ENCODE measurements at regions of chr1 and their contacts with region 1.

Region 1: DNA sequence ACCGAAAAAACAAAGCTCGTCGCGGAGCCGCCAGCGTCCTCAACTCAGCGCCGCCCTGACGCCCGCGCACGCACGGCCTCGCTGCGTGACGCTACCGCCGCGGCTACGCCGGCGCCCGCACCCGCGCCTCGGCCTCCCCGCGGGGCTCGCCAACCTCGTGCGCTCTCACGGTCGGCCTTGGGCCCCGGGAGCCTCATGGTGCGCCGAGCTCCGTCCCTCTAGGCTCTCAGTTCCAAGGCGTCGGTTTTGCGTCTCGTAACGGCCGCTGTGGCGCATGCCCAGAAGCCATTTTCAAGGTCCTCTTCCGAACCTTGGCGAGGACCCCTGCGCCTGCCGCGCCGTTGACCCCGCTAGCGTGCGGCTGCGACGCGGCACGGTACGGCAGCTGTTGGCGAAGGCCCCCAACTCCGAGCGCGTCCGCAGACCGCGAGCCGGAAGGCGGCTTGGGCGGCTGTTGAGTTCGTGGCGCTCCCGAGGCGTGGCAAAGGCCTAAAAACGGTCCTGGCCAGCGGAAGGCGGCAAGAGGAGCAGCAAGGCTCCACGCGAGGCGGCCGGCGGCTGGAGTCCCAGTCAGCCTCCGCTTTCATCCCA is at the start of gene HENMT1:
- DNase-seq: peak; percentile 65 to 95 (median 76)
- ATAC-seq: peak; percentile 88
- H3K4me3 ChIP-seq: peak within 1 kb of the TSS; percentile 65
- H3K4me3 Mint-ChIP-seq: peak within 1 kb of the TSS; percentile 82
- H3K27ac ChIP-seq: peak within 1 kb of the TSS; percentile 95 to 96
- H3K27ac Mint-ChIP-seq: peak within 1 kb of the TSS; percentile 99
- H3K4me1 ChIP-seq: peaks cover 12% of the 10 kb centered on the region
- H3K4me1 Mint-ChIP-seq: peaks cover 43% of the 10 kb centered on the region
- H3K27me3 ChIP-seq: no peaks in the 10 kb centered on the region
- H3K27me3 Mint-ChIP-seq: no peaks in the 10 kb centered on the region
- CTCF ChIP-seq: no peak
- total RNA-seq, gene HENMT1: 6.3 to 8.2 TPM

Region 2: DNA sequence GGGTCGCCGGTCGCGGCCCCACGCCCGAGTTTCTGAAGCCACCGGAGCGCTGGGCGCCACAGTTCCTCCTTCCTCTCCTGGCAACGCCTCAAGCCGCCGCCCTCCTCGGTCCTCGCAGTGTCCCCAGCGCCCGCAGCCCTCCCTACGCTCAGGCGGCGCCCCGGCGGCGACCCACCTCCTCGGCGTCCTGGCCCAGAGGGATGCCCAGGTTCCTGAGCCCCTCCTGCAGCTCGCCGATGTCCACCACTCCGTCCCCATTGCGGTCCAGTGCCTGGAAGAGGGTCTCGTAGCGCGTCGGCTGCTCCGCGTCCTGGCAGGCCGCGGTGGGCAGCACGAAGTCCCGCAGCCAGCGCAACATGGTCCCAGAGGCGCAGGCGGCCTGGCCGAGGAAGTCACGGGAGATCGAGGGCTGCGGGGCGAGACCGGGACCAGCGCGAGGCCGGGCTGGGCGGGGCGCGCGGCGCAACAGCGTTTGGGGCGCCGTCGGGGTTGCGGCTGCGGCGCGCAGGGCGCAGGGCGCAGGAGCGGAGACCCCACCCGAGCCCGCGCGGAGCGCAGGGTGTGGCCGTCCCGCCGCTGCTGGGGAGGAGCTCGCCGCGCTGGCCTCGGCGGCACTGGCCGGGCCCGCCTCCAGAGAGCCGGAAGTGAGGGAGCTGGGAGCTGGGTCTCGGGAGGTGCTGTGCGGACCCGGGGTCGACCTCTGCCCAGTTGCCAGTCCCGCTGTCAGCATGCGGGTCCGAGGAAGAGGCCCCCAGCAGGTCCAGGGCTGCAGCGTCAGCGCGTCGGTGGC is 461.1 kb before region 1 on chr1 and contains the start of gene SLC25A24:
- CTCF ChIA-PET with region 1: no interaction called
- POLR2A ChIA-PET with region 1: interaction called, 21 read pairs
- intact Hi-C with region 1: no loop called
- DNase-seq: peak; percentile 51 to 89 (median 69)
- ATAC-seq: peak; percentile 92
- H3K4me3 ChIP-seq: peak within 1 kb of the TSS; percentile 97
- H3K4me3 Mint-ChIP-seq: peak within 1 kb of the TSS; percentile 94
- H3K27ac ChIP-seq: peak within 1 kb of the TSS; percentile 42 to 79
- H3K27ac Mint-ChIP-seq: peak within 1 kb of the TSS; percentile 83
- H3K4me1 ChIP-seq: peaks cover 16% of the 10 kb centered on the region
- H3K4me1 Mint-ChIP-seq: peaks cover 34% of the 10 kb centered on the region
- H3K27me3 ChIP-seq: no peaks in the 10 kb centered on the region
- H3K27me3 Mint-ChIP-seq: no peaks in the 10 kb centered on the region
- CTCF ChIP-seq: no peak
- total RNA-seq, gene SLC25A24: 4.9 to 5.5 TPM

Region 3: GRCh38 chr1:108708691-108709660 is 47.9 kb after region 1 on chr1:
- CTCF ChIA-PET with region 1: no interaction called
- POLR2A ChIA-PET with region 1: interaction called, 18 read pairs
- intact Hi-C with region 1: no loop called
- DNase-seq: peak; percentile 41 to 83 (median 61)
- ATAC-seq: peak; percentile 79
- H3K4me3 ChIP-seq: no peak overlapping the region
- H3K4me3 Mint-ChIP-seq: no peak overlapping the region
- H3K27ac ChIP-seq: no peak overlapping the region
- H3K27ac Mint-ChIP-seq: no peak overlapping the region
- H3K4me1 ChIP-seq: peaks cover 28% of the 10 kb centered on the region
- H3K4me1 Mint-ChIP-seq: peaks cover 29% of the 10 kb centered on the region
- H3K27me3 ChIP-seq: no peaks in the 10 kb centered on the region
- H3K27me3 Mint-ChIP-seq: no peaks in the 10 kb centered on the region
- CTCF ChIP-seq: peak; percentile 49